ENCODE measurements at regions of chr19 and their contacts with region 1.

Region 1: GRCh38 chr19:49497047-49497788 is 984 bp downstream of the RPS11 start:
- DNase-seq: peak in 2 of 10 donors; percentile 34 to 36

Region 2: DNA sequence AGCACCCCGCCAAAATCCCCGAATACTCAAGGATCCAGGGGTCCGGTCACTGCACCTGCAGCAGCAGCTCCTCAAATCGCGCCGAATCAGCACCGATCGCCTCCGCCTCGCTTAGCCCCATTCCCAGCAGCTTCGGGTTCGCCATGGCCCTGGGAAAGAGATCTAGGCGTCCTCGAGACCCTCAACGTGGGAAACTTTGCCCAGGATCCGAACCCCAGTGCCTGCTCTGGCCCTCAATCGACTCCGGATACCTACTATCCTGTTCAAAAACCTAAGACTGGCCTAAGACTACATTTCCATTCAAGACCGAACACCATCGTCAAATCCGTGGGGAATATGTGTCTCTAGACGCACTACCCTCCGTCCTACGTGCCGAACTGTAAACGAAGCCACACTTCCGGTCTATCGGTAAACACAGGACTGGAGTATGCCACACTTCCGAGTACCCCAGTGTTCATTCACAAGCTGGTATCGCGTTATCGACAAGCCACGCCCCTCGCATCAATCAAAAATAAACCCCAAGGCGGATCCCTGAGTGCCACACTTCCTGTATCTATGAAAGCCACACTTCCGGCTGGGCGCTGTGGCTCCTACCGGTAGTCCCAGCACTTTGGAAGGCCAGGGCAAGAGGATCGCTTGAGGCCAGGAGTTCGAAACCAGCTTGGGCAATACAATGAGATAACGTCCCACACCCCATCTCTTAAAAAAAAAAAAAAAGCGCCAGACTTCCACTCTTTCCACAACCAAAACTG is 45.6 kb before region 1 on chr19 and contains the start of gene PIH1D1:
- intact Hi-C with region 1: loop called (anchors 5 kb)
- DNase-seq: peak; percentile 92 to 99 (median 96)

Region 3: DNA sequence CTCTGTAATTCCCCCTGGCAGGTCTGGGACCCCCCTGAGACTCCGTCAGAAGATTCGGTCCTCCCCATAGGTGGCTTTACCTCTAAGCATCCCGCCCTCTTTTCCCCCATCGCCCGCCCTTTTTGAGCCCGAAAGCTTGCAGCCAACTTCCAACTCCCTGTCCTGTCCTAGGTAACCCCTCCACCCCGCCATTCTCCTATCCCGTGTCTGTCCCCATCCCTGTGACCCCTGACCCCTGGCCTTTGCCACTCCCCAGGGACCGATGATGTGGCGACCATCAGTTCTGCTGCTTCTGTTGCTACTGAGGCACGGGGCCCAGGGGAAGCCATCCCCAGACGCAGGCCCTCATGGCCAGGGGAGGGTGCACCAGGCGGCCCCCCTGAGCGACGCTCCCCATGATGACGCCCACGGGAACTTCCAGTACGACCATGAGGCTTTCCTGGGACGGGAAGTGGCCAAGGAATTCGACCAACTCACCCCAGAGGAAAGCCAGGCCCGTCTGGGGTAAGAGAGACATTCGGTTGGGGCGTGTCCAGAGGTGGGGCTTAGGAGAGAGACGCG is 31.1 kb after region 1 on chr19:
- intact Hi-C with region 1: no loop called
- DNase-seq: no peak